SK-N-SH (cell line): ENCODE measurements at regions of chr16 and their contacts with region 1.

Region 1: GRCh38 chr16:58000706-58001676 is at the start of gene USB1:
- DNase-seq: peak; percentile 98
- H3K4me3 ChIP-seq: peak within 1 kb of the TSS; percentile 88 to 94
- H3K27ac ChIP-seq: peak within 1 kb of the TSS; percentile 76 to 88
- H3K4me1 ChIP-seq: peaks cover 0 to 18% of the 10 kb centered on the region in 2 experiments; a peak in 2 of 4 replicates
- H3K27me3 ChIP-seq: no peaks in the 10 kb centered on the region
- CTCF ChIP-seq: peak; percentile 57
- EP300 ChIP-seq: no peak
- RAD21 ChIP-seq: peak; percentile 66
- polyA plus RNA-seq, gene USB1: 87.3 and 94.1 TPM in 2 replicates

Region 2: GRCh38 chr16:57882792-57883191 is 118.2 kb before region 1 on chr16:
- CTCF ChIA-PET with region 1: interaction called, 10 read pairs
- POLR2A ChIA-PET with region 1: no interaction called
- DNase-seq: peak; percentile 90
- H3K4me3 ChIP-seq: no peak overlapping the region
- H3K27ac ChIP-seq: no peak overlapping the region
- H3K4me1 ChIP-seq: peaks cover 0 to 12% of the 10 kb centered on the region in 2 experiments; a peak in 2 of 4 replicates
- H3K27me3 ChIP-seq: peaks cover 5% of the 10 kb centered on the region; the same call in 1 of the 2 replicates
- CTCF ChIP-seq: no peak
- EP300 ChIP-seq: peak in 1 of 2 experiments; percentile 64; a peak in 2 of 4 replicates
- RAD21 ChIP-seq: peak; percentile 23; the same call in 1 of the 2 replicates

Region 3: DNA sequence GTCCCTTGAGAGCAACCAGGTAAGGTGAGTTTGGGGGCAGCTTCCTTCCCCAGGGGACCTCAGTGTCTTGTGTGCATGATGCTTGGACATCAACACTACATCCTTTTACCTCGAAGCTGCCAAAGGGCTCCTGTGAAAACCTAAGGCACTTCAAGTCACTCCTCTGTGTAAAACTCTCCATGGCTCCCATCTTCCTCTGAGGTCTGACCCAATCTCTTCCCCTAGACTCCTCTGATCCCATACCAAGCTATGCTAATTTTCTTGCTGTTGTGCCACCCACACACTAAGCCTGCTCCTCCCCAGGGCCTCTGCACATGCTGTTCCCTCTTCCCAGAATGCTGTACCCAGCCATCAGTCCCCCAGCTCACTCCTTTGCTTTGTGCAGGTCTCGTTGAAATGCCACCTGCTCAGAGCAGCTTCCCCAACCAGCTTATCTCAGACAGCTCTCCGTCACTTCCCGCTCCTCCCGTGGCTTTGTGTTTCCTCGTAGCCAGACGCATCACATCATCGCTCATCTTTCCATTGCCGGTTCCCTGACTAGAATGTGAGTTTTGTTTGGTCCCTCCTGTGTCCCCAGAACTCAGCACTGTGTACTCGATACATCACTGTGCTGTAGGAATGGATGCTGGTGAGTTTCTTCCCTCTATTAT is 108.4 kb before region 1 on chr16:
- CTCF ChIA-PET with region 1: interaction called, 71 read pairs
- POLR2A ChIA-PET with region 1: no interaction called
- DNase-seq: no peak
- H3K4me3 ChIP-seq: no peak overlapping the region
- H3K27ac ChIP-seq: no peak overlapping the region
- H3K4me1 ChIP-seq: peaks cover 6 to 8% of the 10 kb centered on the region in 2 experiments; a peak in 2 of 4 replicates
- H3K27me3 ChIP-seq: no peaks in the 10 kb centered on the region; the same call in 1 of the 2 replicates
- CTCF ChIP-seq: no peak
- EP300 ChIP-seq: no peak
- RAD21 ChIP-seq: no peak

Region 4: GRCh38 chr16:57899771-57900661 is 101.0 kb before region 1 on chr16:
- CTCF ChIA-PET with region 1: interaction called, 71 read pairs
- POLR2A ChIA-PET with region 1: no interaction called
- DNase-seq: peak; percentile 86
- H3K4me3 ChIP-seq: no peak overlapping the region
- H3K27ac ChIP-seq: no peak overlapping the region
- H3K4me1 ChIP-seq: no peaks in the 10 kb centered on the region; a peak in 1 of 4 replicates
- H3K27me3 ChIP-seq: no peaks in the 10 kb centered on the region
- CTCF ChIP-seq: peak; percentile 95
- EP300 ChIP-seq: no peak
- RAD21 ChIP-seq: peak; percentile 94

Region 5: GRCh38 chr16:57906382-57907316 is 94.3 kb before region 1 on chr16:
- CTCF ChIA-PET with region 1: interaction called, 71 read pairs
- POLR2A ChIA-PET with region 1: no interaction called
- DNase-seq: no peak
- H3K4me3 ChIP-seq: no peak overlapping the region
- H3K27ac ChIP-seq: no peak overlapping the region
- H3K4me1 ChIP-seq: no peaks in the 10 kb centered on the region
- H3K27me3 ChIP-seq: no peaks in the 10 kb centered on the region; the same call in 1 of the 2 replicates
- CTCF ChIP-seq: peak; percentile 34
- EP300 ChIP-seq: no peak
- RAD21 ChIP-seq: no peak

Region 6: DNA sequence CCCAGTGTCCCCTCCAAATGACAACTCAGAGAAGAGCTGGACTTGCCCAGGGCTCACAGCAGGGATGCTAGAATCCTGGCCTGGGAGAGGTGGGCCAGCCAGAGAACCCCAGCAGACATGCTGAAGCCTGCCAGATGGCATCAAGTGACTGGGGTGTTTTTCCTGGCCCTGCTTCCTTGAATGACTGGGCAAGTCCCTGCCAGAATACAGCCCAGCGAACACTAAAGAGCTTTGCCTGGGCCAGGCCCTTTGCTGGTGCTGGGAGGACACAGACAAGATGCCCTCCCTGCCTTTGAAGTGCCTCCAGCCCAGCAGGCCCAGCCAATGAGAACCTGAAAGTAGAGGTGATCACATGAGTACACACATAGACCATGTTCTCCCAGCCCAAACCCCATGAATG is 12.1 kb before region 1 on chr16:
- CTCF ChIA-PET with region 1: interaction called, 18 read pairs
- POLR2A ChIA-PET with region 1: no interaction called
- DNase-seq: no peak
- H3K4me3 ChIP-seq: no peak overlapping the region
- H3K27ac ChIP-seq: no peak overlapping the region; a peak in 1 of 4 replicates
- H3K4me1 ChIP-seq: peaks cover 0 to 16% of the 10 kb centered on the region in 2 experiments; a peak in 1 of 4 replicates
- H3K27me3 ChIP-seq: no peaks in the 10 kb centered on the region
- CTCF ChIP-seq: no peak
- EP300 ChIP-seq: no peak
- RAD21 ChIP-seq: no peak

Region 7: DNA sequence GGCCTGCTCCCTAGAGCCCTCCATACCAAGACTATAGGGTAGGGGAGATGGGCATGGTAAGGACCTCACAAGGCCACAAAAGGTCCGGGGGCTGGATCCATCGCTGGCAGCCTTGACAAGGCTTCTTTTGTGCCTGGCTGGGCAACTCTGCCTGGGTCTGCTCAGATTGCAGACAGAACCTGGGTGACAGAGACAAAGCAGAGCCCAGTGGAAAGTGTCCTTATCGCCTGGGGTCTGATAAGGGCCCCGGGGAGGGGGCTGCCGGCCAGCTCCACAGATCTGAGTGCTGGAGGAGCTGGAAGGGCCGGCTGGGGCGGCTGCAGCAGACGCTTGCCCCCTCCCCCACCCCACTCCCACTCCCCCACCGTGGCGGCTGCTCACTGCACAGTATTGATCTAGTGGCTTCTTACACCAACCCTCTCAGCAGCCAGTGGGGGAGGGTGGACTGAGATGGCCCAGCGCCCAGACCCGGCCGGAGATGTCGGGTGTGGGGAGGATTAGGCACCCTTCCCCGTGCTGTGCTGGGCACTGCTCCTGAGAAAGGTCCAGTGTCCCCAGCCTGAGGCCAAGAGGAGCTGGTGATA is 31.8 kb after region 1 on chr16:
- CTCF ChIA-PET with region 1: interaction called, 13 read pairs
- POLR2A ChIA-PET with region 1: no interaction called
- DNase-seq: peak; percentile 94
- H3K4me3 ChIP-seq: no peak overlapping the region; a peak in 1 of 4 replicates
- H3K27ac ChIP-seq: peak overlapping the region in 1 of 2 experiments; percentile 96; a peak in 2 of 4 replicates
- H3K4me1 ChIP-seq: peaks cover 0 to 68% of the 10 kb centered on the region in 2 experiments; a peak in 1 of 4 replicates
- H3K27me3 ChIP-seq: no peaks in the 10 kb centered on the region
- CTCF ChIP-seq: no peak
- EP300 ChIP-seq: peak in 1 of 2 experiments; percentile 86; a peak in 2 of 4 replicates
- RAD21 ChIP-seq: peak; percentile 3; the same call in 1 of the 2 replicates

Region 8: GRCh38 chr16:58086426-58087208 is 85.6 kb after region 1 on chr16:
- CTCF ChIA-PET with region 1: no interaction called
- POLR2A ChIA-PET with region 1: no interaction called
- DNase-seq: peak; percentile 29
- H3K4me3 ChIP-seq: no peak overlapping the region
- H3K27ac ChIP-seq: no peak overlapping the region
- H3K4me1 ChIP-seq: no peaks in the 10 kb centered on the region; a peak in 1 of 4 replicates
- H3K27me3 ChIP-seq: no peaks in the 10 kb centered on the region
- CTCF ChIP-seq: no peak
- EP300 ChIP-seq: no peak
- RAD21 ChIP-seq: no peak

Region 9: DNA sequence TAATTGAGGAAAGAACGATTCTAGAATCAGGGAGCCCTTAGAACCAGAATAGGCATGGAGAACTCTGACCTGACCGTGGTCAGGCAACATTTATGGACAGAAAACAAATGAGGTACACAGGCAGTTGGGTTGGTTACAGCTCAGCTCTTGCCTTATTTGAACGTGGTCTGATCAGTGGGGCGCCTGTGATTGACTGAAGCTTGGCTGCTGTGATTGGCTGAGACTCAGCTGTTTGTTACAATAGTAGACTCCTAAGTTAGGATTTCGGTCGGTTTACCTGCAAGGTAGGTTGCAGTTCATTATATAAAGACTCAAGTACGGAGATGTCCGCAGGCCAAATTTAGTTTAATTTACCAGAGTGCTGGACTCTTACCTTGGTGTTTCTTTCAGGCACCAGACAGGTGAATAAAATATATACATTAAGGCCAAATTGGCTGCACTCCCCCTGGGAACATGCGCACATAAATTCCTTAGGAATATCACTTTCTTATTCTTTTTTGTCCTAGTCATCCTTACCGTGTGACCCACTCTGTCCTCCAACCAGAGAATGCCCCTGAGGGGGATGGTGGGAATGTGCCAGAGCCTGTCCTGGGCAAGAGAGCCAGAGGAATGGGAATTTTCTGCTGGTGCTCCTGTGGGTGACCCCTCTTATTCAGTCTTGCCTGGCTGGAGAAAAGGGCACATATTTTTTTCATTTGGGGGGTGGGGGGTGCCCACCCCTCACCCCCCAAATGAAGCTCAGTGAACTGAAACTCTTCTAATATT is 204.5 kb after region 1 on chr16:
- CTCF ChIA-PET with region 1: no interaction called
- POLR2A ChIA-PET with region 1: no interaction called
- DNase-seq: no peak
- H3K4me3 ChIP-seq: no peak overlapping the region
- H3K27ac ChIP-seq: no peak overlapping the region
- H3K4me1 ChIP-seq: no peaks in the 10 kb centered on the region
- H3K27me3 ChIP-seq: peaks cover 20% of the 10 kb centered on the region; the same call in 1 of the 2 replicates
- CTCF ChIP-seq: no peak
- EP300 ChIP-seq: no peak
- RAD21 ChIP-seq: no peak